Right ventricle myocardium inferior (tissue), 1 donor: ENCODE measurements at regions of chr17 and their contacts with region 1.

Region 1: GRCh38 chr17:42116705-42117396 is 4.3 kb downstream of the KAT2A start:
- DNase-seq: peak; percentile 87
- ATAC-seq: peak; percentile 11

Region 2: GRCh38 chr17:41966463-41967140 is 150.2 kb before region 1 on chr17 and contains the start of gene CNP:
- intact Hi-C with region 1: loop called (anchors 2 kb)
- DNase-seq: peak; percentile 96
- ATAC-seq: peak; percentile 96
- total RNA-seq, gene CNP: 28.2 TPM

Region 3: DNA sequence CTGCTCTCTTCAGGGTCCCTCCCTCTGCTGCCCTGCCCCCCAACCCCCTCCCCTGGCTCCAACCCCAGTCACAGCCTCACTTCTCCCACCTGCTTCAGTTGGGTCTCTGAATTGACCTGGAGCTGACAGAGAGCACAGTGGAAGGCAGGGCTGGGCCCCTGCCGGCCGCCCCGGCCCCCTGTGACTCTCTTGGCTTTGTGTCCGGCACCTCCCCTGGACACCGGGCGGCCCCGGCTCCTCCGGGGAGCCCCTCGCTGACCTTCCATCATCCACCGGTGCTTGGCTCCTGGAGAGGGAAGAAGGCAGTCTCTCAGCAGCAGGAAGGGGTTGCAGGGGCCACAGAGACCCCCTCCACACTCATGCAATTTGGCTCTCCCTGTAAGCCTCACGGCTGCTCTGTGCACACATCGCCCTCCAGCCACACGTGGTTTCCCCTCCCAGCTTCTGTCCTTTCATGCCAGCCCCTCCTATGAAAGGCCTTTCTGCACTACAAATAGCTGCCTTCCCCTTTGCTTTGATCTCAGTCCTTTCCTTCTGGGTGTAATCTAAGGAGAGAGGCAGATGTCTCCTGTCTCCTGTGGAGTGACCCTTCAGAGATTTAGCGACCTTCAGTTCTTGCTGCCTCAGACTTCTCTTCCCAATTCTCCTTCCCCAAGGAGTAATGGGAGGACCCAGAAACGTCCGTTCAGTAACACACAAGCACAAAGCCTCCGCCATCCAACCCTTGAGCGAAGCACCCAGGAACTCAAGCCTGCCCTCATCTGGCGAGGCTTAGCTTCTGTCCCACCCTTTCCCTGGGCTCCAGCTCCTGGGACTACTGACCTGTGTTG is 88.7 kb before region 1 on chr17:
- intact Hi-C with region 1: loop called (anchors 1 kb)
- DNase-seq: no peak
- ATAC-seq: no peak

Region 4: DNA sequence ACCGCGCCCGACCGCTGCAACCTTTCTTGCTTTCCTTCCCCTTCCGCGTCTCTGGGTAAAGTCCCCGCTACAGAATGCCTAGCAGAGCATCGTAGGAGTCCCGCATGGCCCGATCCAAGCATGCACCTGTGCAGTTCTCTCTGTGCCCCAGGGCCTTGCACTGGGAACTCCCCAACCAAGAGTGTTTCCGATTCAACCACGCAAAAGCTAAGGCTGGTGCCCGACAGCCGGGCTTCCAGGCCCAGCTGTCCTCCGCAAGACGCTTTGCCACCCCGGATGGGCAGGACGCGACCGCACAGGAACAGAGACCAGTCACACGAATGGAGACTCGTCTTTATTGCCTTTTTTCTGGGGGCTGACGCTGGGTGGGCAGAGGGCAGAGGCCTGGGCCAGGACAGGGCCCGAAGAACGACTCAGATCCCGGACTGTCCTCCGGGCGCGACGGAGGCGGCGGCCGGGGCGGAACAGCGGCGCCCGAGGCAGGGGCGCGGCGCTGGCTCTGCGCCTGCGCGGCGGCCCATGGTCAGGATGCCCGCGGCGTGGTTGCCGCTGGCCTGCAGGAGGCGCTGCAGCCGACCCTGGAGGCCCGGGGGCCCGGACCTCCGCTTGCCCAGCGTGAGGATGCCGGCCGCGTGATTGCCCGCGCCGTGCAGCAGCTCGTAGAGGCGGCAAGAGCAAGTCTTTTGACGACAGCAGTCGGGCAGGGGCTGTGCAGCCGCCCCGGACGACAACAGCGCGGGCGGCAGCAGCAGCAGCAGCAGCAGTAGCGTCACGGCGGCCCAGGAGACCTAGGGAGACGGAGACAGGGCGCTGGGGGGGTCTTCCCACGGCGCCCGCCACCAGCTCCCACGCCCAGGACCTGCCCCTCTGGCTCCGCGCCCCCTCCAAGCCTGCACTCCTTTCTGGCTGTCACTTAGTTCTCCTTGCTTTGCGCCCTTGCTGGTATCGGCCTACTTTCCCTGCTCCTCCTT is 67.2 kb after region 1 on chr17:
- intact Hi-C with region 1: loop called (anchors 2 kb)
- DNase-seq: peak; percentile 87
- ATAC-seq: peak; percentile 87

Region 5: GRCh38 chr17:42202696-42203095 is 85.8 kb after region 1 on chr17:
- intact Hi-C with region 1: no loop called
- DNase-seq: no peak
- ATAC-seq: no peak

Region 6: DNA sequence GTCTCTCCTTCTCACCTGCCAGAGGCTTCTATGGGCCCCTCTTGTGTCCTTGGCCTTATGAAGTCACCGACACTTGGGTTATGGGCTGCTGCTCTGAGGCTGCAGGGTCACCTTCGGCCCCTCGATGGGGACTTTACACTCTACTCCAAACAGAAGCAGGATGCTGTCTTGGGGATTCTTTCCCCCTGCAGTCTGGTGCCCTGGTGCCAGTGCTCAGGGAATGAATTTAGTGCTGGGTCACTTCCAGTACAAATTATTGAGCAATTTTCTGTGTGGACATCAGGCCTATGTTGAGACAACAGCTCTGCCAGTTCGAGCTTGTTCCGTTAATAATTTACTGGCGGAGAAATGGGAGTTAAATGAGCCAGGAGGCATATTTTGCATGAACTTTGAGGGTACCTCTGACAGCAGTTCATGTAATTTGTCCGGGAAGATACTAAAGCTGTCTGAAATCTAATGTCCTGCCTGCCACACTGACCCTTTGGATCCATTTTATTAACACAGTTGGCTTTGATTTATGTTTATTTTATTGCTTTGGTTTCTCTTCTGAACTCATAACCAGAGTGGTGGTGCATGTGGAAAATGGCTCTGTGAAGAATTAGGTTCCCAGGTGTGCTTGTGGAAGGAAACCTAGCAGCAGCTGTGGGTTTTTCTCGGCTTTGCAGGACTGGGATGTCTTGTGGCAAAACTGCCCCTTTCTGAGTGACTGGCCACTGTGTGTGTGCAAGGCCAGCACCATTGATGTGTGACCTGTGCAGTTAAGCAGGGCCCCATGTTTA is 1332.8 kb after region 1 on chr17:
- intact Hi-C with region 1: no loop called
- DNase-seq: no peak
- ATAC-seq: peak; percentile 35